ENCODE measurements at regions of chr15 and their contacts with region 1.

Region 1: DNA sequence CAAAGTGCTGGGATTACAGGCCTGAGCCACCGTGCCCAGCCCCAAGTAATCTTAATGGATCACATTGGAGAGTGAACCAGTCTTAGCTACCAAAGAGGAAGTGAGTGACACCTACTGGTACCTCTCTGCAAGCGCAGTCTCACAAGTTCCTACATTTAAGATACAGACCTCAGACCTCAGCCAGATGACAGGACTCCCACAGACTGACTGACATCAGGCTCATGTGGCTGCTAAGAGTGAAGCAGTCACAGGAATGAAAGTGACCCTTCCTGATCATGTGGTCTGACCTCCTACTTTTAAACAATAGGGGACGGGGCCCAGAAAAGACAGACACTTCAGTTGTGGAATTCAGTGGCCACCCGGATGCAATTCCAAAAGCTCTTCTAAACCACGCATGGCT is 36.3 kb upstream of the GNB5 start:
- DNase-seq: peak; percentile 58
- H3K4me3 Mint-ChIP-seq: no peak overlapping the region
- H3K27ac Mint-ChIP-seq: no peak overlapping the region
- H3K4me1 Mint-ChIP-seq: peaks cover 36% of the 10 kb centered on the region
- H3K27me3 Mint-ChIP-seq: no peaks in the 10 kb centered on the region

Region 2: DNA sequence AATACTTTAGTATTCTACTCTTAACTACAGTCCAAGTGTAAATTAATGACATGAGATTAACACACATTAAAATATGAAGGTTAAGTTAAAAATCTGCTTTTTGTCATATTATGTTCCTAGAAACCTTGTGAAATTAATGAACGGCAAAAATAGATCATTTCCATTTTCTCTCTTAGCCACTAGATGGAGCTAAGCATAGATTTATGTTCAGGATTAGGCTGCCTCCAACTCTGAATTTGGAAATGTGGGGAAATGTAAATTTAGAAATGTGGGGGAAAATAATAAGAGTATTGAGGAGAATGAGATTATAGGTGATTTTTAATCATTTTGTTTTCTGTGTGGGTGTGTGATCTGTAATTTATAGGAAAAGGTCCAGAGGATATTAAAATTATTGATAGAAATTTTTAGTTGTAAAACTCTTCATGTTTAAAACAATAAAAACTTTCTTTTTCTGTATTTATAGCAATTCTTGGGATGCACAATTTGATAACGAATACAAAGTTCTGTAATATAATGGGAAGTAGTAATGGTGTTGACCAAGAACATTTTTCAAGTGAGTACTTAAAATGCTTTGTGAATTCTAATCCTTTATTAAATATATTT is 338.8 kb before region 1 on chr15:
- intact Hi-C with region 1: loop called (anchors 5 kb)
- DNase-seq: no peak
- H3K4me3 Mint-ChIP-seq: no peak overlapping the region
- H3K27ac Mint-ChIP-seq: no peak overlapping the region
- H3K4me1 Mint-ChIP-seq: peaks cover 8% of the 10 kb centered on the region
- H3K27me3 Mint-ChIP-seq: no peaks in the 10 kb centered on the region

Region 3: DNA sequence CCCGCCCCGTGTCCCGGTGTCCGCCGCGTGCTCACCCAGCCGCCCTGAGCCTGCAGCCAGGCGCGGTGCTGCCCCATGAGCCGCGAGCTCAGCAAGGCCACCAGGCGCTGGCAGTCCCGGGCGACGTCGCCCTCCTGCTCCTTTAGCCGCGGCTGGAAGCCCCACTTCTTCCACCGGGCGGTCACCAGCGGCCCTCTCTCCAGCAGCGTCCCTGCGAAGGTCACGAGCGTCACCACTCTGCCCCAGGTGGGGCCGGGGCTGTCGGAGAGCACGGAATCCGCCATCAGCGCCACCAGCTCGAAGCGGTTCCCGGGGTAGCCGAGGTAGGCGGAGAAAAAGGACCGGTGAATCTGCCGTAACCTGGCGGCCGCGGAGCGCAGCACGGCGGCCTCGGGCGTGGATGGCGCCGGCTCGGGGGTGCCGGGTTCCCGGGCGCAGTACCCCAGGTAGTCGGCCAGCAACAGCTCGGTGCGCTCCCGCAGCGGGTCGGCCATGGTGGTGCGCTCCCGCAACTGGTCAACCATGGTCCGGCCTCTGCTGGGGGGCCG is 115.2 kb before region 1 on chr15:
- intact Hi-C with region 1: loop called (anchors 10 kb)
- DNase-seq: peak; percentile 11
- H3K4me3 Mint-ChIP-seq: peak overlapping the region; percentile 52
- H3K27ac Mint-ChIP-seq: no peak overlapping the region
- H3K4me1 Mint-ChIP-seq: no peaks in the 10 kb centered on the region
- H3K27me3 Mint-ChIP-seq: peaks cover 34% of the 10 kb centered on the region

Region 4: GRCh38 chr15:52139599-52140491 is 87.6 kb before region 1 on chr15:
- intact Hi-C with region 1: loop called (anchors 1 kb)
- DNase-seq: peak; percentile 53
- H3K4me3 Mint-ChIP-seq: no peak overlapping the region
- H3K27ac Mint-ChIP-seq: peak overlapping the region; percentile 4
- H3K4me1 Mint-ChIP-seq: peaks cover 7% of the 10 kb centered on the region
- H3K27me3 Mint-ChIP-seq: no peaks in the 10 kb centered on the region

Region 5: GRCh38 chr15:52179278-52180195 is 47.9 kb before region 1 on chr15:
- intact Hi-C with region 1: loop called (anchors 1 kb)
- DNase-seq: peak; percentile 87
- H3K4me3 Mint-ChIP-seq: peak overlapping the region; percentile 90
- H3K27ac Mint-ChIP-seq: peak overlapping the region; percentile 94
- H3K4me1 Mint-ChIP-seq: peaks cover 37% of the 10 kb centered on the region
- H3K27me3 Mint-ChIP-seq: no peaks in the 10 kb centered on the region

Region 6: DNA sequence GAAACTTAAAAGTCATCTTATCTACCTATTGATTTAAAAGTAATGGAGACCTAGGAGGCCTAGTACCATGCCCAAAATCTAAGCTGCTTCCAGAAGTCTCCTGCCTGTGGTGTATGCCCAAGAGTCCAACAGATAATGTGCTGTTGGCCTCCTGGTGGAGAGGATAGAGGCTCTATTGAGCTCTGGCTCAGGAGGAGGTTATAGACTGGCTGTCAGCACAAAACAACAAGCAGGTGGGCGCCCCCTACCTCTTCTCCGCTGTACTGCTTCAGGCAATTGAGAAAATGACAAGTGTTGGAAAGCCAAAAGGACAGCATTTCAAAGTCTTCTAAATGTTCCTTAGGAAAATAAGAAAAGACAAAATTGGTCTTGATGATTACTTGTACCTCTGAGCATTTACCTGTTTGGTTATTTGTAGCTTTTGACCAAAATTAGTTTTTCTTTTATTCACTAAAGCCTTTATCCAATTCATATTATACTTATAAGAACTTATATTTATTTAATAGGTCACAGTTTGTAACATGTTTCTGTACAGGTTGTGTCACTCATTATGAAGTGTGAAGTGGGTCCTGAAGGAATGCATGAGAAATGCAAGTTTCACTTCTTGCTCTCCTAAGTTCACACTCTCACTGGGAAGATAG is 19.0 kb before region 1 on chr15:
- intact Hi-C with region 1: loop called (anchors 1 kb)
- DNase-seq: peak; percentile 65
- H3K4me3 Mint-ChIP-seq: no peak overlapping the region
- H3K27ac Mint-ChIP-seq: no peak overlapping the region
- H3K4me1 Mint-ChIP-seq: no peaks in the 10 kb centered on the region
- H3K27me3 Mint-ChIP-seq: peaks cover 4% of the 10 kb centered on the region

Measured in activated T-helper 1 cell treated with anti-CD3 and anti-CD28 coated beads, Interleukin-12 subunit alpha, Interleukin-12 subunit beta, Interleukin-2, Interleukin-4 antibody, amounts not matched to agents 30 ng/mL and 10 ng/mL and 1 ng/mL, durations not matched to agents 14 hours and 24 hours and 36 hours (primary cell).